CD8-positive, alpha-beta T cell (primary cell): ENCODE measurements at regions of chr2 and their contacts with region 1.

Region 1: GRCh38 chr2:183078465-183079138 is at the start of gene DUSP19:
- DNase-seq: peak; percentile 61 to 88 (median 73)
- ATAC-seq: peak; percentile 74
- H3K4me3 ChIP-seq: peak within 1 kb of the TSS; percentile 74 to 92
- H3K4me3 Mint-ChIP-seq: peak within 1 kb of the TSS; percentile 94
- H3K27ac ChIP-seq: peak within 1 kb of the TSS in 1 of 2 experiments; percentile 26
- H3K27ac Mint-ChIP-seq: peak within 1 kb of the TSS; percentile 66
- H3K4me1 ChIP-seq: peaks cover 7% of the 10 kb centered on the region
- H3K4me1 Mint-ChIP-seq: peaks cover 11% of the 10 kb centered on the region
- H3K27me3 ChIP-seq: no peaks in the 10 kb centered on the region
- H3K27me3 Mint-ChIP-seq: peaks cover 2% of the 10 kb centered on the region
- CTCF ChIP-seq: no peak
- total RNA-seq, gene DUSP19: 0.24 TPM in 1 of 2 experiments, not detected in the other

Region 2: DNA sequence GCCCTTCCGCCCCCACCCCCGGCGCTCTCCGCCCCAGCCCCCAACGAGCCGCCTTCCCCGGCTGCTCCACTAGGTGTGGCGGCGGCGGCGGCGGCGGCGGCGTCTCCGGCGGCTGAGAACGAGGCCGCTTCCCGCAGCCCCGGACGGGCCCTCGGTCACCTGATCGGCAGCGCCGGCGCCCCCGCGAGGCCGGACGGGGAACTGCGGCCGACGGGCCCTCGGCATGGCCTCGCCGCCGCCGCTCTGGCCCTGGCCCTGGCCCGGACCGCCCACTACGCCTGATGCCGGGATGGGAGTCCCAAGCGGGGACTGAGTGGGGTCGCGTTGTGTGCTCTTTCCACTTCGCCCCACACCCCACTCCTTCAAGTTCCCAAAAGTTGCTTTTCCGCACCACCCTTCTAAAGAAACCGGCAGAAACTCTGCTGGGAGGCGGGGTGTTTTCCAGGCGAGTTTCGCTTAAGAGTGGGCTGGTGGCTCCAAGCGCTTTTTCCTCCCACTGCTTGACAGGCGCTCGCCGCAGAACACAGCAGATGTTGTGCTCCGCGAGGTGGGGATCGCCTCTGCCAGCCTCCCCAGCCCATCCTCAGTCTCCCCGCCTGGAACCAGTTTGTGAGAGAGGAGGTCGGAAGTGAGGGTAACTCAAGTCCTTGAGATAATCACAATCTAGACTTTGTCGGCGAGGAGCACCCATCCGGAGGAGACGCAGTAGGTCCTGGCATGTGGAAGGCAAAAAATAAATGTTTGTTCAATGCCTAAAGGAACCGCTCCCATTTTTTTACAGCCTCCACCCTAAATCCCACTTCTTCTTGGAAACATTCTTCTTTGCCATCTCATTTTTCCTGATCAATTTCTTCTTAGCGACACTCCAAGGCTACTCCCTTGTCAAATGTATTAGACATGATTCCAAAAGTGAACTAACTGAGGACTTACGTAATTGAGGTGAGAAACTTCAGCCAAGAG is 40.0 kb before region 1 on chr2 and contains the start of gene NCKAP1:
- CTCF ChIA-PET with region 1: interaction called, 4 read pairs
- POLR2A ChIA-PET with region 1: no interaction called
- intact Hi-C with region 1: loop called in 1 of 2 experiments (anchors 1 kb)
- DNase-seq: peak; percentile 63 to 89 (median 78)
- ATAC-seq: peak; percentile 85
- H3K4me3 ChIP-seq: peak within 1 kb of the TSS; percentile 52 to 54
- H3K4me3 Mint-ChIP-seq: peak within 1 kb of the TSS; percentile 80
- H3K27ac ChIP-seq: no peak within 1 kb of the TSS
- H3K27ac Mint-ChIP-seq: peak within 1 kb of the TSS; percentile 41
- H3K4me1 ChIP-seq: peaks cover 29% of the 10 kb centered on the region
- H3K4me1 Mint-ChIP-seq: peaks cover 30% of the 10 kb centered on the region
- H3K27me3 ChIP-seq: peaks cover 10 to 11% of the 10 kb centered on the region in 2 experiments
- H3K27me3 Mint-ChIP-seq: peaks cover 51% of the 10 kb centered on the region
- CTCF ChIP-seq: peak; percentile 74
- total RNA-seq, gene NCKAP1: 0.81 to 1.4 TPM

Region 3: DNA sequence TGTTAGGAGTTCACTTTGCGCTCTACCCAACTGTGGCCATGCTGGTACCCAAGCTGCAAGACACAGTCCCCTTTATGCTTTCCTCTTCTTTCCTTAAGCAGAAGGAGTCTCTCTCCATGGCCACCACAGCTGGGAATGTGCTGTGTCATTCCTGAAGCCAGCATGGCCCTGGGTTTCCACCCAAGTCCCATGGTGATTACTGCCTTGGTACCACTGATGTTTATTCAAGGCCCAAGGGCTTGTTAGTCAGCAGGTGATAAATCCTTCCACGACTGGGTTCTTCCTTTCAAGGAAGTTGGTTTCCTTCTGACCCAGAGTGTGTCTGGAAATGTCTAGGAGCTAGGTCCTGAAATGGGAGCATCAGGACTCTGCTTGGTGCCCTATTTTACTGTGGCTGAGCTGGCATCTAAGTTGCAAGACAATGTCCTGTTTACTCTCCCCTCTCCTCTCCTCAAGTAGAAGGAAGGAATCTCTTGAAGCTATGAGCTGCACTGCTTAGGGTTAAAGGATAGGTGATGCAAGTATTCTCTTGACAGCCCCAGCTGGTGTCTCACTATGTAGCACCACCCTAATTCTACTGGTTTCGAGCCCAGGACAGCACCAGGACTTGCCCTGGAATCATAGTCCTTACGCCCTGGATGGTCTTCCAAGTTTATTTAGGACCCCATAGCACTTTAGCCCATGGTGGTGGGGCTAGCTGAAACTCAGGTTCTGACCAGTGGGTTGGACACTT is 27.0 kb after region 1 on chr2:
- CTCF ChIA-PET with region 1: no interaction called
- POLR2A ChIA-PET with region 1: no interaction called
- intact Hi-C with region 1: loop called in 1 of 2 experiments (anchors 1 kb)
- DNase-seq: no peak
- ATAC-seq: no peak
- H3K4me3 ChIP-seq: no peak overlapping the region
- H3K4me3 Mint-ChIP-seq: no peak overlapping the region
- H3K27ac ChIP-seq: no peak overlapping the region
- H3K27ac Mint-ChIP-seq: no peak overlapping the region
- H3K4me1 ChIP-seq: no peaks in the 10 kb centered on the region
- H3K4me1 Mint-ChIP-seq: no peaks in the 10 kb centered on the region
- H3K27me3 ChIP-seq: no peaks in the 10 kb centered on the region
- H3K27me3 Mint-ChIP-seq: peaks cover 15% of the 10 kb centered on the region
- CTCF ChIP-seq: no peak